ENCODE measurements at regions of chr3 and their contacts with region 1.

Region 1: DNA sequence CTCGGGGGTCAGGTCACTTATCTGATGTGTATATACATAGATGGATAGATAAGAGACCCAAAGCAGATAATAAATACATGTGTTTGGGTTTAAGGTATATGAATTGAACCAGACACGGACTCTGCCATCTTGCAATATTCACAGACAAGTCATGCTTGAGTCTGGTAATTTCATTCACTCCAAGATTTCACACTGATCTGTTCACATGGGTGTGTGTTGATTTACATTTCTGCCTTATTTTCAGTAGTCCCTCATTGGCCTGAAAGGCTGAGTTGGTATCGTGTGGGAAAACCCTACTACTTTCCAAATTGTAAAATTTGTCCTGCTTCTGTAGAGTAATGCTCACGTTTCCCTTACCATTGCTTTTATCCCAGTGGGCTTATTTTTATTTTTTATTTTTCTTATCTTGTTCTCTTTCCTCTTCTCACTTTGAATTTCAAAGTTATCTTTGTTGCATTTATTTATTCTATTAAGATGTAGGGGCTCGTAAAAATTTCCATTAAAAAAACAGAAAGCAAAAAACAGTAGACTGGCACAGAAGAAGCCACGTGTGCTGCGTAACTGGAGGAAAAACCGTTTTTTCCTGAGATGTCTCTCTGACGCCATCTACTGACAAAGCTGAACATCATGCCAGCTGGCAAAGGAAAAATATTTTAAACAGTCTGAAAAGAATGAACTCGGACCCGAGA is 10.8 kb upstream of the MFSD1 start:
- DNase-seq: peak; percentile 51 to 75 (median 69)
- H3K4me3 ChIP-seq: peak overlapping the region in 1 of 3 experiments; percentile 45
- H3K4me3 Mint-ChIP-seq: peak overlapping the region; percentile 51 to 82
- H3K27ac ChIP-seq: no peak overlapping the region
- H3K27ac Mint-ChIP-seq: peak overlapping the region in 1 of 7 donors; percentile 13
- H3K4me1 ChIP-seq: peaks cover 5% of the 10 kb centered on the region in 2 donors
- H3K4me1 Mint-ChIP-seq: peaks cover 5% of the 10 kb centered on the region
- H3K27me3 ChIP-seq: no peaks in the 10 kb centered on the region
- H3K27me3 Mint-ChIP-seq: peaks cover 0 to 2% (median 2%) of the 10 kb centered on the region in 3 donors
- CTCF ChIP-seq: peak; percentile 88

Region 2: DNA sequence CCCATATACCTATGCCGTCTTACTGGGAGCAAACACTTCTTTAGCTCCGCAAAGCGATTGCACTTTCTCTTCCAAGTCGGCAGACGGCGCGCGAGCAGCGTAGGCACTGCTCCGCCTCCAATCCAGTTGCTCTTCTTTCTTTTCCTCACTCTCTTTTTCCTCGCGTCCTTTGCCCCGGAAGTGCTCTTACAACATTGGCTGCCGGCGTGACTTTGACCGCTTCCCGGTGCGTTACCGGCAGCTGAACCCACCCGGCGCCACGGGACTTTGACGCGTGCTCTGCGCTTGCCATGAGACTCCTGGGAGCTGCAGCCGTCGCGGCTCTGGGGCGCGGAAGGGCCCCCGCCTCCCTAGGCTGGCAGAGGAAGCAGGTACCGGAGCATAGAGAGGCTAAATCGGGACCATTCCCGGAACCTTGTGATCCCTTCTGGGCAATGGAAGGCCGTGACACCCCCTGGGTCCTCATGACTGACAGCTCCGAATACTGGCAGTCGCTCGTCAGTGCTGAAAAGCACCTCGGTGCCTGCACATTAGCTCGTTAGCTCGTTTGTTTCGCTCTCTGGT is 146.6 kb before region 1 on chr3 and contains the start of gene GFM1:
- intact Hi-C with region 1: loop called in 1 of 2 experiments (anchors 5 kb)
- DNase-seq: peak; percentile 90 to 95 (median 90)
- H3K4me3 ChIP-seq: peak within 1 kb of the TSS; percentile 71 to 94 (median 88)
- H3K4me3 Mint-ChIP-seq: peak within 1 kb of the TSS; percentile 92 to 99
- H3K27ac ChIP-seq: peak within 1 kb of the TSS; percentile 85 to 93
- H3K27ac Mint-ChIP-seq: peak within 1 kb of the TSS; percentile 91 to 98 (median 95)
- H3K4me1 ChIP-seq: peaks cover 8 to 9% of the 10 kb centered on the region in 2 donors
- H3K4me1 Mint-ChIP-seq: peaks cover 15% of the 10 kb centered on the region
- H3K27me3 ChIP-seq: no peaks in the 10 kb centered on the region
- H3K27me3 Mint-ChIP-seq: peaks cover 0 to 4% (median 0%) of the 10 kb centered on the region in 3 donors
- CTCF ChIP-seq: peak; percentile 95
- polyA plus RNA-seq, gene GFM1: 11.2 to 21.3 (median 18.5) TPM

Region 3: GRCh38 chr3:158659454-158660237 is 131.4 kb before region 1 on chr3:
- intact Hi-C with region 1: loop called (anchors 5 kb)
- DNase-seq: peak; percentile 31 to 51 (median 44)
- H3K4me3 ChIP-seq: no peak overlapping the region
- H3K4me3 Mint-ChIP-seq: no peak overlapping the region
- H3K27ac ChIP-seq: no peak overlapping the region
- H3K27ac Mint-ChIP-seq: peak overlapping the region in 1 of 7 donors; percentile 19
- H3K4me1 ChIP-seq: no peaks in the 10 kb centered on the region
- H3K4me1 Mint-ChIP-seq: no peaks in the 10 kb centered on the region
- H3K27me3 ChIP-seq: no peaks in the 10 kb centered on the region
- H3K27me3 Mint-ChIP-seq: no peaks in the 10 kb centered on the region
- CTCF ChIP-seq: peak; percentile 72

Region 4: DNA sequence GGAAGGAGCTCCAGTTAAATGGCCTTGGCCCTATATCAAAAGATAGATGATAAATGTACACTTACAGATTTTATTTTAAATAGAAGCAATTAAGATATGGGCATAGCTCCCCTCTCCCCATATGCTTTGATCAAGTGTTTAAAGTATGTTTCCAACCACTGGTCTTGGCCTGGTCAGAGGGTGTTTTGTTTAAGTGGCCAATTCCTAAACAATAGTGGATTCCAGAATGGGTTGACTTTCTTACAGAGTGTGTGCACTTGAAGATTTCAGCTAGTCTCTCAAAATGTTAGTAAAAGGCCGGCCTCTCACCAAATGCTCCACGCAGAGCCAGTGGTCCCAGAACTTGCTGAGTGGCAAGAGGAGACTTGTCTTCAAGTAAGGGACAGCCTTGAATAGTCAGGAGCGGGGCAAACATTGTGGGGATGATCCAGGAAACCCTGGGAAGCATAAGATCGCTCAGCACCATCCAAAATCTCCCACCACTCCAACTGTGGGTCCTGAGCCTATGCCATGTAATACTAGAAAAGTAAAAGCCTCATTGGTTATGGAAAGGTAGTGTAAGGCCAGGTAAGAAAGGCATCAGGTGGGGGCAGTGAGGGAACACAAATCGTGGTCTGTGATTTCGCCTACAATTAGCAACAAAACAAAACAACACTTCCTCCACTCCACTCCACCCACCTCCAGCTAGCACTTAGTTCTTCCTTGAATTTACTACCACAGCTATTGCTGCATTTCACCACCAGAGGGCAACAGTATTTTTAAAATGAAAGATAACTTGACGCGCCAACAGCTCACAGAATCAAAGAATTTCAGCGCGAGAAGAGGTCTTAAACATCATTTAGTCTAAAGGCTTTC is 63.6 kb before region 1 on chr3:
- intact Hi-C with region 1: loop called in 1 of 2 experiments (anchors 5 kb)
- DNase-seq: peak; percentile 50 to 64 (median 63)
- H3K4me3 ChIP-seq: peak overlapping the region in 2 of 3 experiments; percentile 45 to 66
- H3K4me3 Mint-ChIP-seq: peak overlapping the region; percentile 42 to 83
- H3K27ac ChIP-seq: peak overlapping the region in 1 of 2 donors; percentile 21
- H3K27ac Mint-ChIP-seq: peak overlapping the region in 5 of 7 donors; percentile 52 to 74 (median 64)
- H3K4me1 ChIP-seq: peaks cover 24 to 34% of the 10 kb centered on the region in 2 donors
- H3K4me1 Mint-ChIP-seq: peaks cover 24% of the 10 kb centered on the region
- H3K27me3 ChIP-seq: peaks cover 0 to 10% of the 10 kb centered on the region in 2 donors
- H3K27me3 Mint-ChIP-seq: peaks cover 2 to 15% (median 9%) of the 10 kb centered on the region in 3 donors
- CTCF ChIP-seq: peak; percentile 80

Measured in CD14-positive monocyte (primary cell).